ENCODE measurements at regions of chr5 and their contacts with region 1.

Region 1: GRCh38 chr5:179806250-179807222 is at the start of gene MGAT4B:
- DNase-seq: peak; percentile 68
- H3K4me3 ChIP-seq: peak within 1 kb of the TSS; percentile 55 to 90 (median 82)
- H3K27ac ChIP-seq: peak within 1 kb of the TSS; percentile 67
- H3K4me1 ChIP-seq: peaks cover 23% of the 10 kb centered on the region
- H3K27me3 ChIP-seq: no peaks in the 10 kb centered on the region
- CTCF ChIP-seq: no peak
- POLR2A ChIP-seq: peak; percentile 70
- total RNA-seq, gene MGAT4B: 226 and 243 TPM in 2 replicates

Region 2: GRCh38 chr5:179697993-179698934 is 108.3 kb before region 1 on chr5:
- CTCF ChIA-PET with region 1: no interaction called
- POLR2A ChIA-PET with region 1: no interaction called
- dilution Hi-C with region 1: no loop called
- intact Hi-C with region 1: loop called (anchors 5 kb)
- DNase-seq: peak; percentile 100
- H3K4me3 ChIP-seq: peak overlapping the region; percentile 34 to 77 (median 70)
- H3K27ac ChIP-seq: peak overlapping the region; percentile 94
- H3K4me1 ChIP-seq: peaks cover 18% of the 10 kb centered on the region
- H3K27me3 ChIP-seq: no peaks in the 10 kb centered on the region
- CTCF ChIP-seq: no peak
- POLR2A ChIP-seq: peak; percentile 63

Region 3: GRCh38 chr5:179720222-179720621 is 86.3 kb before region 1 on chr5:
- CTCF ChIA-PET with region 1: no interaction called
- POLR2A ChIA-PET with region 1: no interaction called
- dilution Hi-C with region 1: no loop called
- intact Hi-C with region 1: no loop called
- DNase-seq: no peak
- H3K4me3 ChIP-seq: no peak overlapping the region
- H3K27ac ChIP-seq: no peak overlapping the region
- H3K4me1 ChIP-seq: no peaks in the 10 kb centered on the region
- H3K27me3 ChIP-seq: no peaks in the 10 kb centered on the region
- CTCF ChIP-seq: no peak
- POLR2A ChIP-seq: no peak

Region 4: DNA sequence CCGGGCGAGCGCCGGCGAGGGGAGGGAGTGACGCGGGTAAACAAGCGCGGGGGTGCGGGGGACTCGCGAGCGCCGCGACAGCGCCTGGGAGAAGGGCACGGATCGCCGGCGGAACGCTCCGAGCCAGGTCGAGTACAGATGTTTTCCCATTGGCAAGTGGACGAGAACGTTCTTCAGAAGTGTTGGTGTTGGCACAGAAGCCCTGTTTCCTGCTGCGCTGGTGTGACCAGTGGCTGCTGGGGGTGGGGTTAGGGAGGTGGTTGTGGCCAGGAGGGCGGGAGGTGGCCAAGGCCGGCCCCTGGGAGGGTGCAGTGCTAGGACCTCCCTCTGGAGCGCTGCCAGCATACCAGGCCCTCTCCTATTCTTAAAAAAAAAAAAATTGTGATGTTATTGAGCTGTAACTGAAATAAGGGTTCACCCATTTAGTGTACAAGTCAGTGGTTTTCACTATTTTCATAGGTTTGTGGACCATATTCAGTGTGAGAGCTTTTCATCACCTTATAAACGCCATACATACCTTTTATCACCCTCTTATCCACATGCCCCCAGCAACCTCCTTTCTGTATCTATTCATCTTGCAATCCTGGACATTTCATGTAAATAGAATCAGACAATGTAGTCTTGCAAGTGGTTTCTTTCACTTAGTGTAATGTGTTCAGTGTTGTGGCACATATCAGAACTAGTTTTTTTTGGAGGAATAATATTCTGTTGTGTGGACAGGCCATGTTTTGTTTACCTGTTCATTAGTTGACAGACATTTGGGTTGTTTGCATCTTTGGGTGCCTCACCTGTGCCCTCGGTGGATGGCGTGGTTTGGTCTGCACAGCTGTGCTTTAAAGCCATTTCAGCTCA is 15.3 kb after region 1 on chr5:
- CTCF ChIA-PET with region 1: interaction called, 21 read pairs
- POLR2A ChIA-PET with region 1: interaction called, 18 read pairs
- dilution Hi-C with region 1: no loop called
- intact Hi-C with region 1: loop called (anchors 1 kb)
- DNase-seq: peak; percentile 93
- H3K4me3 ChIP-seq: peak overlapping the region; percentile 49 to 90 (median 82)
- H3K27ac ChIP-seq: peak overlapping the region; percentile 96
- H3K4me1 ChIP-seq: peaks cover 37% of the 10 kb centered on the region
- H3K27me3 ChIP-seq: no peaks in the 10 kb centered on the region
- CTCF ChIP-seq: no peak
- POLR2A ChIP-seq: peak; percentile 85

Region 5: GRCh38 chr5:179858586-179859427 is 52.3 kb after region 1 on chr5 and contains the start of gene MRNIP:
- CTCF ChIA-PET with region 1: interaction called, 5 read pairs
- POLR2A ChIA-PET with region 1: no interaction called
- dilution Hi-C with region 1: no loop called
- intact Hi-C with region 1: loop called (anchors 1 kb)
- DNase-seq: peak; percentile 97
- H3K4me3 ChIP-seq: peak within 1 kb of the TSS; percentile 60 to 97 (median 75)
- H3K27ac ChIP-seq: no peak within 1 kb of the TSS
- H3K4me1 ChIP-seq: no peaks in the 10 kb centered on the region
- H3K27me3 ChIP-seq: no peaks in the 10 kb centered on the region
- CTCF ChIP-seq: peak in 1 of 2 donors; percentile 9
- POLR2A ChIP-seq: peak; percentile 82
- total RNA-seq, gene MRNIP: 17.6 and 19.1 TPM in 2 replicates

Region 6: DNA sequence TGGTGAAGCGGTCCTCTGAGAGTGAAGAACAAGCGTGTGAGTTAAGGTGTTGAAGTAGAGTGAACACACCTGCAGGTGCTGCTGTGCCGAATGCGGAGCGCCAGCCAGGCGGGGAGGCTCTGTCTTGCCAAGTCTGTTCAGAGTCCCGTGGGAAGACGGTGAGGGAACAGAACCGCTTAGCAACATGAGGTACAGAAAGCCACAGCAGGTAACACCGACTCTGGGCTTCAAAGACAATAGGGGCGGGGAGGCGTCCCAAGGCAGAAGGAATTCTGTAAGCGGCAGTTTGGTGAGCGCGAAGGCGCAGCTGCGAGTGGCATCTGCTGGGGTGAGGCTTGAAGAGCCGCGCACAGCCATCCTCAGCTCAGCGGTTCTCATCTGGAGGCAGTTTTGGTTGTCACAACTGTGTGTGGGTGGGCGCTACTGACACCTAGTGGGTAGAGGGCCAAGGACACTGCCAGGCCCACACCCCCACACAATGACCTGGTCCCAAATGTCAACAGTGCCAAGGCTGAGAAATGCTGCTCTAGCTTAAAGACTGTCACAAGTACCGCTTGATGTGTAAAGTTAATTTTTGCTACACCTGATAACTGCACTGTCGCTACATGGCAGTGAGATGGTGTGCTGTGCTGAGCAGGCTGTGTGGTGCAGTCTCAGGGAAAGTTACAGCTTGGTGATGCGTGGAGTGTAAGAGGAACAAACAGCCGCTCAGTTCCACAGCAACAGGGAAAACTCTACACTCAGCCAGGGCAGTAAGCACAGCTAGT is 168.6 kb after region 1 on chr5:
- CTCF ChIA-PET with region 1: interaction called, 8 read pairs
- POLR2A ChIA-PET with region 1: no interaction called
- dilution Hi-C with region 1: no loop called
- intact Hi-C with region 1: loop called (anchors 1 kb)
- DNase-seq: peak; percentile 33
- H3K4me3 ChIP-seq: no peak overlapping the region
- H3K27ac ChIP-seq: no peak overlapping the region
- H3K4me1 ChIP-seq: no peaks in the 10 kb centered on the region
- H3K27me3 ChIP-seq: no peaks in the 10 kb centered on the region
- CTCF ChIP-seq: peak; percentile 34 to 60
- POLR2A ChIP-seq: no peak

Region 7: DNA sequence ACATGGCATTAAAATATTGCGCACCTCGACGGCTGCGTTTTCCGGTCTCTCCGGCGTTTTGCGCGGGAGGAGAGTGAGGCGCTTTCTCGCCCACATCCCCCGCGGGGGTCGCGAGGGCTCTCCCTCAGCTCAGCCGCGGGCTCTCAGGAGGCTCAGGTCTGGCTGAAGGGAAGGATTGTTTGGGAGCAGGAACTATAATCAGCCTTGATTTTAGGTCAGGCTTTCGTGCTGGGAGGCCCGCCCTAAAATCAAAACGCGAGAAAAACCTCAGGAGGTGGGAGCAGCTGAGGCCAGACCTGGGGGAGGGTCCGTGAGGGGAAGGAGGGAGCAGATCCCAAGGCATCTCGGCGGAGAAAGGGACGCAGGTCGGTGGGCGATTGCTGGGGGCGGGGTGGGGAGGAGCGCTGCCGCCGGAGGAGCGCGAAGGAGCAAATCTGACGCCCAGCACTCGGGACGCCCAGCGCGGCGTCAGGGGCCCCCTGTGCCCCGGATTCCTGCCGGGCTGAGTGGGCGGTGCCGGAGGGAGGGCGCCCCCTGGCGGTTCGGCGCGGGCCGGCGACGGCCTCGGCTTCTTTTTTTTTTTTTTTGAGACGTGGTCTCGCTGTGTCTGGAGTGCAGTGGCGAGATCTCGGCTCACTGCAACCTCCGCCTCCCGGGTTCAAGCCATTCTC is 283.7 kb after region 1 on chr5:
- CTCF ChIA-PET with region 1: interaction called, 10 read pairs
- POLR2A ChIA-PET with region 1: no interaction called
- dilution Hi-C with region 1: no loop called
- intact Hi-C with region 1: loop called (anchors 1 kb)
- DNase-seq: peak; percentile 77
- H3K4me3 ChIP-seq: peak overlapping the region; percentile 41 to 76 (median 72)
- H3K27ac ChIP-seq: peak overlapping the region; percentile 49
- H3K4me1 ChIP-seq: peaks cover 4% of the 10 kb centered on the region
- H3K27me3 ChIP-seq: peaks cover 1 to 4% of the 10 kb centered on the region in 2 experiments
- CTCF ChIP-seq: peak; percentile 79 to 85
- POLR2A ChIP-seq: no peak

Measured in endothelial cell of umbilical vein (primary cell).